ENCODE measurements at regions of chr13 and their contacts with region 1.

Region 1: DNA sequence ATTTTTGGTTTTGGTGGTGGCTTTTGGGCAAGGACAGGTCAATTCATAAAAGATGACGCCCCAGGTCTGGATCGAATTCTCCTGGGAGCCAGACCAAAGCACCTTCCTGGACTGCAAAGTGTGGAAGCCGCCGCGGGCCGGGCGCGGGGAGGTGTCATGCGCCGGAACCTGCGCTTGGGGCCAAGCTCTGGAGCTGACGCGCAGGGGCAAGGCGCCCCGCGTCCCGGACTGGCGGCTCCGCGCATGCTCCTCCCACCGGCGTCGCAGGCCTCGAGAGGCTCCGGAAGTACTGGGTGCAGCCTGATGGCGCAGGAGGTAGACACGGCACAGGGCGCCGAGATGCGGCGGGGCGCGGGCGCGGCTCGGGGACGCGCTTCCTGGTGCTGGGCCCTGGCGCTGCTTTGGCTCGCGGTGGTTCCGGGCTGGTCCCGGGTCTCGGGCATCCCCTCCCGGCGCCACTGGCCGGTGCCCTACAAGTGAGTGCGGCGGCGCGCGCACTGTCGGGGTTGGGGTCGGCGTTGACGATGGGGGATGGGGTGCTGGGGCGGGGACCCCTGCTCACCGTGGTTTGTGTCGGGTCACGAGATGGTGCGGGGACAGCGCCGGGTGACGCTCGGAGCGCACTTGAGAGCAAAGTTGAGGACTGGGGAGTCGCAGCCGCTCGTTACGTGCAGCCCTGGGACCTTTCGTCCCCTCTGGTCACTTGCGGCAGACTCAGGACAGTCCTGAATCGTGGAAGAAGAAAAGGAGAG is at the start of gene CLN5:
- DNase-seq: peak; percentile 95 to 96
- H3K4me3 ChIP-seq: peak within 1 kb of the TSS; percentile 37 to 75 (median 59)
- H3K27ac ChIP-seq: peak within 1 kb of the TSS; percentile 86 to 99 (median 95)
- H3K4me1 ChIP-seq: peaks cover 17 to 31% of the 10 kb centered on the region in 2 donors
- H3K27me3 ChIP-seq: no peaks in the 10 kb centered on the region
- CTCF ChIP-seq: peak in 3 of 6 experiments; percentile 12 to 27 (median 22)
- POLR2A ChIP-seq: peak; percentile 95 to 100
- total RNA-seq, gene CLN5: 89.2 to 204 (median 173) TPM

Region 2: GRCh38 chr13:77026818-77027585 is 35.0 kb after region 1 on chr13 and contains the start of gene FBXL3:
- intact Hi-C with region 1: loop called (anchors 5 kb)
- DNase-seq: peak; percentile 83
- H3K4me3 ChIP-seq: peak within 1 kb of the TSS; percentile 81 to 96 (median 92)
- H3K27ac ChIP-seq: peak within 1 kb of the TSS; percentile 99 to 100 (median 100)
- H3K4me1 ChIP-seq: peaks cover 33 to 38% of the 10 kb centered on the region in 2 donors
- H3K27me3 ChIP-seq: no peaks in the 10 kb centered on the region
- CTCF ChIP-seq: peak in 1 of 6 experiments; percentile 5
- POLR2A ChIP-seq: peak; percentile 61 to 86
- total RNA-seq, gene FBXL3: 144 to 164 (median 155) TPM